ENCODE measurements at regions of chr11 and their contacts with region 1.

Region 1: GRCh38 chr11:95419915-95420314 is 188.9 kb upstream of the SESN3 start:
- DNase-seq: no peak
- ATAC-seq: no peak
- H3K4me3 ChIP-seq: no peak overlapping the region
- H3K27ac ChIP-seq: no peak overlapping the region
- H3K4me1 ChIP-seq: peaks cover 2 to 15% of the 10 kb centered on the region in 2 experiments; a peak in 4 of 5 replicates
- H3K27me3 ChIP-seq: no peaks in the 10 kb centered on the region
- CTCF ChIP-seq: no peak
- EP300 ChIP-seq: no peak
- POLR2A ChIP-seq: no peak
- RAD21 ChIP-seq: no peak

Region 2: DNA sequence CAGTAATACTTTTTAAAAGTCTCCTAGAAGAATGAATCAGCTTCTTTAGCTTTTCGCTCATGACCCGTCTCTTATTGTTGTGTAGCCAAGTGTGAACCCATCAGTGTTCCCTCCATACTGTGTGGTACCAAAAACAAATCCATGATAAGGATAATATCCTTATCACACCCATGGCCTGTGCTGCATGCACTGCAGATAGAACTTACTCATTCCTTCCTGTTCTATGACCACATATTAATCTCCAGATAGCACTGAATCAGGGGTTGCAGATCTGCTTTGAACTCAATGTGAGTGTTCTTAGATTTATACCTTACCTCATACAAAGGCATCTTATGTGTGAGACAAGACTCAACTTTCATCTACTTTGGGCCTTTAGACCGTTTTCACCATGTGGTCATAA is 1343.3 kb after region 1 on chr11:
- CTCF ChIA-PET with region 1: no interaction called
- POLR2A ChIA-PET with region 1: no interaction called
- in situ Hi-C with region 1: loop called (anchors 10 kb)
- intact Hi-C with region 1: no loop called
- DNase-seq: peak in 1 of 4 experiments; percentile 6
- ATAC-seq: no peak
- H3K4me3 ChIP-seq: no peak overlapping the region
- H3K27ac ChIP-seq: no peak overlapping the region
- H3K4me1 ChIP-seq: no peaks in the 10 kb centered on the region
- H3K27me3 ChIP-seq: no peaks in the 10 kb centered on the region
- CTCF ChIP-seq: no peak
- EP300 ChIP-seq: no peak
- POLR2A ChIP-seq: no peak
- RAD21 ChIP-seq: no peak

Measured in K562 (cell line).